Activated CD4-positive, alpha-beta T cell treated with anti-CD3 and anti-CD28 coated beads for 36 hours (primary cell): ENCODE measurements at regions of chr7 and their contacts with region 1.

Region 1: DNA sequence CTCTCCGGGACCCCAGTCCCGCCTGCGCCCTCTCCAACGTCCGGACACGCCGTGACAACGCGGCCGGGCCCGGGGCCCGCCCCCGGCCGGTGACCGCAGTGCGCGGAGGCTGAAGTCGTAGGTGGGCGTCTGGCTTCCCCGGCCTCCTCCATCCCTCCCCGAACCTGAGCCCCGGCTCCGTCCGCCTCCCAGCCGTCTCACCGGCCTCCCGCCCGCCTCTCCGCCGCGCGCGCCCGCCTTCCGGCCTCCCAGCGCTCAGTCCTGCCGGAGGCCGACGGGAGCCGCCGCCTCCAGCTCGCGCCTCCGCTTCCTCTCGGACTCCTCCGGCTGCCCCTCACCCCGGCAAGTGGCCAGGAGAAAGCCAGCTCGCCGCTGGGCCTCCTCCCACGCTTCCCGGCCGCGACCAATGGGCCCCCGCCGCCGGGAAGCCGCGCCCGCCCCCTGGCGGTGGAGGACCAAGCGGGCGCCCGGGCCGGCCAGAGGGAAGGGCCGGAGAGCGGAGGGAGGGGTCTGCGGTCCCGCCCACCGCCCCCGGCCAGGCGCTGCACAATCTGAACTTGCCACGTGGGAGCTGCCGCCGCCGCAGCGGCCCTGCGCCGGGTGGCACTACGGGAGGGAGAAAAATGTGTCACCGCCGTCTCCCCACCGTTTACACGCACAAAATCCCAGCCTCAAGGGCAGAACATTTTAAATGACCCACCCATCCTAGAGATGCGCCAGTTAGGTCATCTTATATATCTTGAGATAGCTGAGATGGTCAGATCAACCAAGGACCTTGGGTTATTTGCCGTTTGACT is at the start of gene FAM3C:
- DNase-seq: peak; percentile 92
- ATAC-seq: peak; percentile 89
- H3K4me3 Mint-ChIP-seq: peak within 1 kb of the TSS; percentile 88
- H3K27ac Mint-ChIP-seq: peak within 1 kb of the TSS; percentile 88
- H3K4me1 Mint-ChIP-seq: peaks cover 33% of the 10 kb centered on the region
- H3K27me3 Mint-ChIP-seq: no peaks in the 10 kb centered on the region
- total RNA-seq, gene FAM3C: 13.3 to 14.9 TPM

Region 2: GRCh38 chr7:120950539-120951308 is 445.4 kb before region 1 on chr7 and contains the start of gene ING3:
- CTCF ChIA-PET with region 1: no interaction called
- POLR2A ChIA-PET with region 1: no interaction called
- intact Hi-C with region 1: loop called (anchors 1 to 2 kb)
- DNase-seq: peak; percentile 97
- ATAC-seq: peak; percentile 94
- H3K4me3 Mint-ChIP-seq: peak within 1 kb of the TSS; percentile 97
- H3K27ac Mint-ChIP-seq: peak within 1 kb of the TSS; percentile 97
- H3K4me1 Mint-ChIP-seq: peaks cover 22% of the 10 kb centered on the region
- H3K27me3 Mint-ChIP-seq: peaks cover 5% of the 10 kb centered on the region
- total RNA-seq, gene ING3: 23.4 to 26.5 TPM

Region 3: DNA sequence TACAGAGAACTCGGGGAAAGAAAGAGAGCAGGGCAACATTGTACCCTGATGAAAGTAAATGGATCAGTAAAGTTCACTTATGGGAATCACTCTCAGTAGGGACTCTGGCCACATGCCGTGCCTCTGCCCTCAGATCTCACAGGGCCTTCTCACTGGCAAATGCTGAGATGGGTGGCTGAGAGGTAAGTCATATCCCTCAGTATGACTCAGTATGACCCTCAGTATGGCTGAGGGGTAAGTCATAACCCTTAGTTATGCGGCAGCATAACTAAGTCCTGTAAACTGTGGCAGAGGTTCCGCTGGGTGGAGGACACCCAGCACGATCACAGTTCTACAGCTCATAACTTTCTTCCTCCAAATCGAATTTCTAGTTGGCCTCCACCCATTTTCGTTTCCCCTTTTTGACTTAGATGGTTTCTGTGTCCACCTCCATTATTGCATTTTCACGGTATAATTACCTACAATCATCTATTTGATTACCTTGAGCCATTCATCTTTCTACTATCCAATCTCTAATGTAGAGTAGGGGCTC is 93.9 kb before region 1 on chr7:
- CTCF ChIA-PET with region 1: no interaction called
- POLR2A ChIA-PET with region 1: no interaction called
- intact Hi-C with region 1: no loop called
- DNase-seq: no peak
- ATAC-seq: peak; percentile 61
- H3K4me3 Mint-ChIP-seq: no peak overlapping the region
- H3K27ac Mint-ChIP-seq: no peak overlapping the region
- H3K4me1 Mint-ChIP-seq: peaks cover 9% of the 10 kb centered on the region
- H3K27me3 Mint-ChIP-seq: peaks cover 17% of the 10 kb centered on the region

Region 4: GRCh38 chr7:121366852-121367431 is 29.2 kb before region 1 on chr7:
- CTCF ChIA-PET with region 1: interaction called, 31 read pairs
- POLR2A ChIA-PET with region 1: no interaction called
- intact Hi-C with region 1: loop called in 1 of 2 experiments (anchors 1 kb)
- DNase-seq: peak; percentile 31
- ATAC-seq: no peak
- H3K4me3 Mint-ChIP-seq: no peak overlapping the region
- H3K27ac Mint-ChIP-seq: no peak overlapping the region
- H3K4me1 Mint-ChIP-seq: peaks cover 10% of the 10 kb centered on the region
- H3K27me3 Mint-ChIP-seq: no peaks in the 10 kb centered on the region

Region 5: DNA sequence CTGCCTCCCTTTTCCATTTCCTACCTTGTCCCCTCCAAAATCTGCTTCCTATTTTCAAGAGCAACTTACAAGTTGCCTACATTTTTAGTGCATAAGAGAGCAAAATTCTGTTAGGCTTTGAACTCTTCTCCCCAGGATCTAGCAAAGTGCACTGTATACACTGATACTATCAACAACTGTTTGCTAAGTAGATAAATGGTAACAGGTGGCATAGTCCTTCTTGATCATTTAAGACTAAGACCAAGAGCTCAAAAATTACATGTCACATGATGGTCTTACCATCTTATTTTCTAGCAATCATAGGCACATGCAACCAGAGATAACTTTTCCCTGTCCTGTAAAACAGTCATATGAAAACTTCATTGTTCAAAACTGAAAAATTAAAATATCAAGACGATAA is 16.2 kb before region 1 on chr7:
- CTCF ChIA-PET with region 1: interaction called, 32 read pairs
- POLR2A ChIA-PET with region 1: interaction called, 5 read pairs
- intact Hi-C with region 1: loop called in 1 of 2 experiments (anchors 2 kb)
- DNase-seq: no peak
- ATAC-seq: no peak
- H3K4me3 Mint-ChIP-seq: no peak overlapping the region
- H3K27ac Mint-ChIP-seq: no peak overlapping the region
- H3K4me1 Mint-ChIP-seq: peaks cover 33% of the 10 kb centered on the region
- H3K27me3 Mint-ChIP-seq: no peaks in the 10 kb centered on the region

Region 6: GRCh38 chr7:121437456-121438127 is 41.4 kb after region 1 on chr7:
- CTCF ChIA-PET with region 1: interaction called, 3 read pairs
- POLR2A ChIA-PET with region 1: interaction called, 3 read pairs
- intact Hi-C with region 1: loop called (anchors 1 kb)
- DNase-seq: no peak
- ATAC-seq: no peak
- H3K4me3 Mint-ChIP-seq: peak overlapping the region; percentile 12
- H3K27ac Mint-ChIP-seq: peak overlapping the region; percentile 79
- H3K4me1 Mint-ChIP-seq: peaks cover 24% of the 10 kb centered on the region
- H3K27me3 Mint-ChIP-seq: no peaks in the 10 kb centered on the region